Prostate gland (tissue), 2 donors: ENCODE measurements at regions of chr5 and their contacts with region 1.

Region 1: GRCh38 chr5:109399092-109399759 is 10.5 kb downstream of the PJA2 start:
- DNase-seq: no peak
- H3K4me3 ChIP-seq: no peak overlapping the region
- H3K27ac ChIP-seq: no peak overlapping the region
- H3K4me1 ChIP-seq: no peaks in the 10 kb centered on the region
- H3K27me3 ChIP-seq: no peaks in the 10 kb centered on the region
- CTCF ChIP-seq: no peak
- POLR2A ChIP-seq: no peak

Region 2: GRCh38 chr5:109028608-109029299 is 370.5 kb before region 1 on chr5:
- intact Hi-C with region 1: no loop called
- DNase-seq: no peak
- H3K4me3 ChIP-seq: no peak overlapping the region
- H3K27ac ChIP-seq: no peak overlapping the region
- H3K4me1 ChIP-seq: no peaks in the 10 kb centered on the region
- H3K27me3 ChIP-seq: no peaks in the 10 kb centered on the region
- CTCF ChIP-seq: no peak
- POLR2A ChIP-seq: no peak

Region 3: GRCh38 chr5:109304309-109304708 is 94.9 kb before region 1 on chr5:
- intact Hi-C with region 1: no loop called
- DNase-seq: no peak
- H3K4me3 ChIP-seq: no peak overlapping the region
- H3K27ac ChIP-seq: no peak overlapping the region
- H3K4me1 ChIP-seq: no peaks in the 10 kb centered on the region
- H3K27me3 ChIP-seq: no peaks in the 10 kb centered on the region
- CTCF ChIP-seq: no peak
- POLR2A ChIP-seq: no peak

Region 4: GRCh38 chr5:109374625-109375024 is 24.6 kb before region 1 on chr5:
- intact Hi-C with region 1: loop called (anchors 2 kb)
- DNase-seq: no peak
- H3K4me3 ChIP-seq: no peak overlapping the region
- H3K27ac ChIP-seq: no peak overlapping the region
- H3K4me1 ChIP-seq: no peaks in the 10 kb centered on the region
- H3K27me3 ChIP-seq: no peaks in the 10 kb centered on the region
- CTCF ChIP-seq: no peak
- POLR2A ChIP-seq: no peak